ENCODE measurements at regions of chr2 and their contacts with region 1.

Region 1: DNA sequence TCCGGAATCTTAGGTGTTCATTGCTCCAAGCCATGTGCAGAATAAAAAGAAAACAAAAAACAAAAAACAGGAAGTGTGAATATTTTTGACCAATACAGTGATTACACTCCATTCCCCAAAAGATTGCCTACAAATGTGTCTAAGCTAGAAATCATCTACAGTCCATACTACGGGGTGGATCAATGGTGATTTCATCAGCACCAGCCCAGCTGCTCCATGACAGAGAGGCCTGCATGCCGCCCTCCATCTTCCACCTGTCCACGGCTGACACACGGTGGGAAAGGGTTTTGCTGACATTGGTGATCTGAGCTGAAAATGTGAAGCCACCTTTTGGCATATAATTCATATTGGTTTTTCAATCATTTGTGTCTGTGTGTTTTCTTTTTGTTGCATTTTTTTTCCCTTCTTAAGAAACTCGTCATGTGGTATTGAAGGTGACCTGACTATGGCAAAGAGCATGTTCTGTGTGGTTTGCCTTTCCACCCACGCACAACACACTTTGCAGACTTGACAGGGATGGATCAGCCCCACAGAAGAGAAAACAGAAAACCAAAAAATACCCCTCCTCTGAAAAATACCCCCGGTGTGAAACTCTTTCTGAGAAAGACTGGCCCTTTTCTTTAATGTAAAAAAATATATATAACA is 533.1 kb downstream of the RNF144A start:
- DNase-seq: peak; percentile 84
- H3K4me3 Mint-ChIP-seq: peak overlapping the region; percentile 47
- H3K27ac Mint-ChIP-seq: peak overlapping the region; percentile 89
- H3K4me1 Mint-ChIP-seq: peaks cover 68% of the 10 kb centered on the region
- H3K27me3 Mint-ChIP-seq: no peaks in the 10 kb centered on the region

Region 2: GRCh38 chr2:6909431-6910385 is 540.6 kb before region 1 on chr2:
- CTCF ChIA-PET with region 1: no interaction called
- POLR2A ChIA-PET with region 1: no interaction called
- intact Hi-C with region 1: loop called (anchors 5 kb)
- DNase-seq: peak; percentile 48
- H3K4me3 Mint-ChIP-seq: peak overlapping the region; percentile 23
- H3K27ac Mint-ChIP-seq: peak overlapping the region; percentile 66
- H3K4me1 Mint-ChIP-seq: peaks cover 84% of the 10 kb centered on the region
- H3K27me3 Mint-ChIP-seq: no peaks in the 10 kb centered on the region

Region 3: GRCh38 chr2:7146151-7146550 is 304.2 kb before region 1 on chr2:
- CTCF ChIA-PET with region 1: no interaction called
- POLR2A ChIA-PET with region 1: no interaction called
- intact Hi-C with region 1: no loop called
- DNase-seq: no peak
- H3K4me3 Mint-ChIP-seq: no peak overlapping the region
- H3K27ac Mint-ChIP-seq: no peak overlapping the region
- H3K4me1 Mint-ChIP-seq: no peaks in the 10 kb centered on the region
- H3K27me3 Mint-ChIP-seq: no peaks in the 10 kb centered on the region

Region 4: DNA sequence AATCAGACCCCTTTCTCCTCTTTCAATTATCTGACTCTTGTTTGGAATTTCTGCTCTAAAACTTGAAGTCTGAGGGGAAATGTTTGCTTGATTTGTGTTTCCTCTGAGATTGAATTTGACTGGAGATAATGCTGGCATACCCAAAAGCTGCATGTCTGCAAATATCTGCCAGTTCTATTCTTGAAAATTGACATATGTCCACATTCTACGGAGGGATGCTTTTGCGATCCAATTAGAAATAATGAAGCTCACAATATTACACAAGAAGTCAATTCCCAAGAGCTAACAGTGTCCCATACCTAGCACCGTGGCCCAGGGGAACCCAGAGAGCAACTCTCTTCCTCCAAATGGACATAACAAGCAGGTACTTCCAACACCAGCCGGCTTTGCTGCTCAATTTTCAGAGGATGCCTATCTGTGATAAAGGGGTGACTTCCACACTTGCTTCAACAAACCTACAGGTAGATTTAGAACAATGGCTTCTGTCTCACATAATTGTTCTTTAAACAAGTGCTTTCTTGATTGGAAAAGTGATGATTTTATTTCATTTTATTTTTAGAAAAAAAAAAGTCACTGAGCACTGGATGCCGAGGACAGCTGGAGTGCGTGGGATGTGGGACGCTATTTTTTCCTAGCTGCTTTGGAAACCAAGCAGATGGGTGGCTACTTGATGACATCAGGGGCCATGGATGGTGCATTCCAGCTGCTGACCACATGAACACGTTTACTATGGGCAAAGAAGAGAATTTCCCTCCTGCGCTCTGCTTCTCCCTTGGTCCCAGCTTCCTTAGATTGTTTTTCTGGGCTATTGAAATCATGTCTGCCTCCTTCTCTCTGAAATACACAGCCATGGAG is 44.2 kb before region 1 on chr2:
- CTCF ChIA-PET with region 1: no interaction called
- POLR2A ChIA-PET with region 1: no interaction called
- intact Hi-C with region 1: no loop called
- DNase-seq: no peak
- H3K4me3 Mint-ChIP-seq: no peak overlapping the region
- H3K27ac Mint-ChIP-seq: no peak overlapping the region
- H3K4me1 Mint-ChIP-seq: peaks cover 13% of the 10 kb centered on the region
- H3K27me3 Mint-ChIP-seq: peaks cover 19% of the 10 kb centered on the region

Region 5: GRCh38 chr2:7467782-7468447 is 17.6 kb after region 1 on chr2:
- CTCF ChIA-PET with region 1: no interaction called
- POLR2A ChIA-PET with region 1: interaction called, 4 read pairs
- intact Hi-C with region 1: loop called (anchors 1 kb)
- DNase-seq: peak; percentile 75
- H3K4me3 Mint-ChIP-seq: peak overlapping the region; percentile 17
- H3K27ac Mint-ChIP-seq: peak overlapping the region; percentile 95
- H3K4me1 Mint-ChIP-seq: peaks cover 41% of the 10 kb centered on the region
- H3K27me3 Mint-ChIP-seq: peaks cover 7% of the 10 kb centered on the region

Region 6: GRCh38 chr2:7523481-7524120 is 73.3 kb after region 1 on chr2:
- CTCF ChIA-PET with region 1: interaction called, 5 read pairs
- POLR2A ChIA-PET with region 1: interaction called, 6 read pairs
- intact Hi-C with region 1: loop called (anchors 1 kb)
- DNase-seq: no peak
- H3K4me3 Mint-ChIP-seq: peak overlapping the region; percentile 58
- H3K27ac Mint-ChIP-seq: peak overlapping the region; percentile 91
- H3K4me1 Mint-ChIP-seq: peaks cover 50% of the 10 kb centered on the region
- H3K27me3 Mint-ChIP-seq: no peaks in the 10 kb centered on the region

Region 7: GRCh38 chr2:7588295-7588694 is 138.0 kb after region 1 on chr2:
- CTCF ChIA-PET with region 1: no interaction called
- POLR2A ChIA-PET with region 1: no interaction called
- intact Hi-C with region 1: loop called (anchors 5 kb)
- DNase-seq: no peak
- H3K4me3 Mint-ChIP-seq: no peak overlapping the region
- H3K27ac Mint-ChIP-seq: peak overlapping the region; percentile 71
- H3K4me1 Mint-ChIP-seq: peaks cover 31% of the 10 kb centered on the region
- H3K27me3 Mint-ChIP-seq: peaks cover 3% of the 10 kb centered on the region

Region 8: GRCh38 chr2:7878786-7879482 is 428.6 kb after region 1 on chr2:
- CTCF ChIA-PET with region 1: no interaction called
- POLR2A ChIA-PET with region 1: no interaction called
- intact Hi-C with region 1: no loop called
- DNase-seq: no peak
- H3K4me3 Mint-ChIP-seq: no peak overlapping the region
- H3K27ac Mint-ChIP-seq: no peak overlapping the region
- H3K4me1 Mint-ChIP-seq: no peaks in the 10 kb centered on the region
- H3K27me3 Mint-ChIP-seq: no peaks in the 10 kb centered on the region